Aorta (tissue), 5 donors: ENCODE measurements at regions of chr2 and their contacts with region 1.

Region 1: GRCh38 chr2:45256867-45257641 is 247.8 kb upstream of the SIX2 start:
- DNase-seq: no peak
- ATAC-seq: peak; percentile 36
- H3K4me3 ChIP-seq: no peak overlapping the region
- H3K27ac ChIP-seq: peak overlapping the region; percentile 78 to 97
- H3K4me1 ChIP-seq: peaks cover 0 to 10% of the 10 kb centered on the region in 2 donors
- H3K27me3 ChIP-seq: no peaks in the 10 kb centered on the region

Region 2: DNA sequence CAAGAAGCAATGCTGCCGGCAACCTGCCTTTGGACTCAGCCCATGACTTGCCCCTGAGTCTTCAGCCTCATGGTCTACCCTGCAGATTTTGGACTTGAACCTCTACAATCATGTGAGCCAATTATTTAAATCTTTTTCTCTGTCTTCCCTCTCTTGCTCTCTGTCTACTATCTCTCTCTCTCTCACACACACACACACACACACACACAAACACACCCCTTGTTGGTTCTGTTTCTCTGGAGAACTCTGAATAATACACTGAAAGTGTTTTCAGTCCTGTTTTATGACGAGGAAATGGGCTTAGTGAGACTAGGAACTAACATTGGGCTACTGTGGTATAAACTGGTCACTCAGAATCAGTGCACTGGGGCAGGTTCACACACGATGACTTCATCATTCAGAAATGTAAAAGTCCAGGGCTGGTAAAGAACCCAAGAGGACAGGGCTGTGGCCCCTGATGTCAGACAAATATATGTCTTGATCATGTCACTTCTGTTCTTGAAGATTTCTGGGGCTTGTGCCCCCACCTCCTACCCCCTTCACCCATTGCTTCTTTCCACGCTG is 18.3 kb after region 1 on chr2:
- intact Hi-C with region 1: loop called in 1 of 2 experiments (anchors 2 kb)
- DNase-seq: no peak
- ATAC-seq: no peak
- H3K4me3 ChIP-seq: no peak overlapping the region
- H3K27ac ChIP-seq: peak overlapping the region in 1 of 2 donors; percentile 78
- H3K4me1 ChIP-seq: peaks cover 4 to 5% of the 10 kb centered on the region in 2 donors
- H3K27me3 ChIP-seq: no peaks in the 10 kb centered on the region